Activated CD4-positive, alpha-beta memory T cell treated with anti-CD3 and anti-CD28 coated beads for 36 hours (primary cell): ENCODE measurements at regions of chr9 and their contacts with region 1.

Region 1: DNA sequence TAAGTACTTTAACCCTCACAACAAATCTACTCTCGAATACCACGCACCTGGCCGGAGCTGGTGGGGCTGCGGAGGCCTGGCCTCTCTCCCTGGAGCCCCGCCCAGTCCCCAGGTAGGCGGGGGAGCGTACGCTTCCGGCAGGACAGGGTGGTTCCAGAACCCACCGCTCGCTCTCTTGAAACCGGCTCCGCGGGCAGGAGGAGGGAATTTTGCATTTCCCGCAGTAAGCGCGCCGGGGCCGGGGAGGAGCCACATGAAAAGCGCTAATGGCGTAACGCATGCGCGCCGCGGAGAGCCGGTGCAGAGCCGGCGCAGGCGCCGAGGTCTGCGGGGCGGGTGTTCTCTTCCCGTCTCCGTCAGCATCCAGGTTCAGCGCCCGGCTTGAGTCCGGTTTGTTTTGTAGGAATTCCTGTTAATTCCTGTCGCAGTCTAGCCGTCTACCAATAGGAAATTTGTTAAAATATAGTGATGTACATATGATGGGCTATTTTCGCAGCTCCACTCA is 20.8 kb downstream of the CAVIN4 start:
- DNase-seq: peak; percentile 86
- H3K4me3 Mint-ChIP-seq: peak overlapping the region; percentile 68
- H3K27ac Mint-ChIP-seq: no peak overlapping the region
- H3K4me1 Mint-ChIP-seq: peaks cover 20% of the 10 kb centered on the region
- H3K27me3 Mint-ChIP-seq: no peaks in the 10 kb centered on the region

Region 2: DNA sequence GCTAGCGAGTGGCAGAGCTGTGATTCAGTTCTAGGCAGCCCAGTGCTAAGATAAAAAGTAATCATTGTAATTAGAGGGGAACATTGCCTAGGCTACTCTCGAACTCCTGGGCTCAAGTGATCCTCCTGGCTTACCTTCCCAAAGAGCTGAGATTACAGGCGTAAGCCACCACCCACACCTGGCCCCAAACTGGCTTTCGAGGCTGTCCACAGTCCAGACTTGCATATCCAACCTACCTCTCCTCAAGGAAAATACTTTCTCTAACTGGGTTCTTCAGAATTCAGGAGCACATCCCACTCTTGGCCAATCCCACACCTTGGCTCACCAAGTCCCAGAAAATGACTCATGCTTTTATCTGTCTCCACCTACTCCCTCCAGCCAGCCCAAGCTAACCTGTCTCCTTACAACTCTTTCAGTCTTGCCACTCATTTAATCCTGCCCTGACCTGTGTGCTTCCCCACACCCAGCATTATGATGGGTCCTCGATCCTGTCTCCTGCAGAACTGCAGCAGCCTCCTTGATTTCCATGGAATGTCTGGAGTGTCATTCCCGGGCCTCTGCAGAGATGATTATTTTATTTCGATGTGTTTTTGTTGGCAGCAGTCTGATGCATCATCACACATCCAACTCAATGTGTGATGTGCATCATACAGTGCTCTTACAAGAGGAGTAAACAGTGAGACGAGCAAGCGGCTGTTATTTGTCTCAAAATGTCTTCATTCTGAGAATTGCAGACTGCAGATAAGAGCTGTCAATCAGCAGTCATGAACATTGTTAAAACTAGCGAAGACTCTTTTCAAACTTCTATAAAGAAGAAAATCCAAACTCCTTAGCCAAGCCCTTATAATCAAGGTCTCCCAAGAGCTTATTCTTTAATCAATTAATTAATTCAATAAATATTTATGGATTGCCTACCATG is 1209.3 kb before region 1 on chr9:
- CTCF ChIA-PET with region 1: no interaction called
- POLR2A ChIA-PET with region 1: no interaction called
- intact Hi-C with region 1: no loop called
- DNase-seq: no peak
- H3K4me3 Mint-ChIP-seq: no peak overlapping the region
- H3K27ac Mint-ChIP-seq: no peak overlapping the region
- H3K4me1 Mint-ChIP-seq: no peaks in the 10 kb centered on the region
- H3K27me3 Mint-ChIP-seq: peaks cover 5% of the 10 kb centered on the region

Region 3: GRCh38 chr9:100011062-100011681 is 587.5 kb before region 1 on chr9:
- CTCF ChIA-PET with region 1: no interaction called
- POLR2A ChIA-PET with region 1: no interaction called
- intact Hi-C with region 1: loop called (anchors 5 kb)
- DNase-seq: peak; percentile 20
- H3K4me3 Mint-ChIP-seq: no peak overlapping the region
- H3K27ac Mint-ChIP-seq: no peak overlapping the region
- H3K4me1 Mint-ChIP-seq: no peaks in the 10 kb centered on the region
- H3K27me3 Mint-ChIP-seq: no peaks in the 10 kb centered on the region

Region 4: GRCh38 chr9:100216178-100216787 is 382.4 kb before region 1 on chr9:
- CTCF ChIA-PET with region 1: no interaction called
- POLR2A ChIA-PET with region 1: no interaction called
- intact Hi-C with region 1: loop called (anchors 10 kb)
- DNase-seq: peak; percentile 76
- H3K4me3 Mint-ChIP-seq: no peak overlapping the region
- H3K27ac Mint-ChIP-seq: no peak overlapping the region
- H3K4me1 Mint-ChIP-seq: peaks cover 2% of the 10 kb centered on the region
- H3K27me3 Mint-ChIP-seq: no peaks in the 10 kb centered on the region

Region 5: GRCh38 chr9:100437860-100438805 is 160.6 kb before region 1 on chr9:
- CTCF ChIA-PET with region 1: interaction called, 10 read pairs
- POLR2A ChIA-PET with region 1: no interaction called
- intact Hi-C with region 1: loop called (anchors 5 kb)
- DNase-seq: peak; percentile 68
- H3K4me3 Mint-ChIP-seq: no peak overlapping the region
- H3K27ac Mint-ChIP-seq: no peak overlapping the region
- H3K4me1 Mint-ChIP-seq: no peaks in the 10 kb centered on the region
- H3K27me3 Mint-ChIP-seq: no peaks in the 10 kb centered on the region

Region 6: GRCh38 chr9:100662122-100662521 is 63.4 kb after region 1 on chr9:
- CTCF ChIA-PET with region 1: no interaction called
- POLR2A ChIA-PET with region 1: no interaction called
- intact Hi-C with region 1: no loop called
- DNase-seq: no peak
- H3K4me3 Mint-ChIP-seq: no peak overlapping the region
- H3K27ac Mint-ChIP-seq: no peak overlapping the region
- H3K4me1 Mint-ChIP-seq: no peaks in the 10 kb centered on the region
- H3K27me3 Mint-ChIP-seq: peaks cover 7% of the 10 kb centered on the region

Region 7: GRCh38 chr9:101311758-101312420 is 713.2 kb after region 1 on chr9:
- CTCF ChIA-PET with region 1: interaction called, 34 read pairs
- POLR2A ChIA-PET with region 1: no interaction called
- intact Hi-C with region 1: loop called (anchors 1 kb)
- DNase-seq: no peak
- H3K4me3 Mint-ChIP-seq: no peak overlapping the region
- H3K27ac Mint-ChIP-seq: no peak overlapping the region
- H3K4me1 Mint-ChIP-seq: no peaks in the 10 kb centered on the region
- H3K27me3 Mint-ChIP-seq: peaks cover 3% of the 10 kb centered on the region

Region 8: GRCh38 chr9:101437806-101438232 is 839.1 kb after region 1 on chr9:
- CTCF ChIA-PET with region 1: no interaction called
- POLR2A ChIA-PET with region 1: no interaction called
- intact Hi-C with region 1: no loop called
- DNase-seq: no peak
- H3K4me3 Mint-ChIP-seq: no peak overlapping the region
- H3K27ac Mint-ChIP-seq: no peak overlapping the region
- H3K4me1 Mint-ChIP-seq: no peaks in the 10 kb centered on the region
- H3K27me3 Mint-ChIP-seq: peaks cover 21% of the 10 kb centered on the region

Region 9: DNA sequence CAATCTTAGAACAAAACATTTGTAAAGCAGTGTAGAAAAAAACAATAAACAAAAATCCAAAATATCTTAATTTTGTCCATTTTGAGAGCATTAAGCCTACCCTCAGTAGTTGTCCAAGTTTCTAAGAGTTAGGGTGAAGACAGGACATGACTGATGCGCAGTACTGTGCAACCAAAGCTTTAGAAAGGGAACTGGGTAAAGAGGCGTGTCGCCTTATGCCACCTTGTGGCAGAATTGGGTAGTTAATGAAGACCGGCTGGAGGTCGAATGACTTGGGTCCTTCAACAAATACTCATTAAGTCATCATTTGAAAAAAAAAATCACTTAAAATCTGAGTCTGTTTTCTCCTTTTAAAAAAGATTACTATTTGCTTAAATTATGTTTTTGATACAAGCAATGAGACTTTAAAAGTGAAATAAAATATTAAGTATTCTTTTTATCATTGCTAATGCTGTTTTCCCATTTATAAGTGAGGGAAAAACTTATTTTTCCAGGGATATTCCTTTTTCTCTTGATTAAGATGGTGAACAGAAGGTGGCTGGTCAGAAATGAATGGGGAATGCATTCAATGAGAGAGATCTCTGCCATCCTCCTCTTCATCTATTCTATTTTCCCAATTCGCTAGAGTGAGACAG is 931.5 kb after region 1 on chr9:
- CTCF ChIA-PET with region 1: no interaction called
- POLR2A ChIA-PET with region 1: no interaction called
- intact Hi-C with region 1: loop called (anchors 5 kb)
- DNase-seq: peak; percentile 79
- H3K4me3 Mint-ChIP-seq: no peak overlapping the region
- H3K27ac Mint-ChIP-seq: no peak overlapping the region
- H3K4me1 Mint-ChIP-seq: peaks cover 20% of the 10 kb centered on the region
- H3K27me3 Mint-ChIP-seq: peaks cover 2% of the 10 kb centered on the region